GM12878 (cell line): ENCODE measurements at regions of chr17 and their contacts with region 1.

Region 1: GRCh38 chr17:8991514-8992285 is 26.2 kb upstream of the PIK3R5 start:
- DNase-seq: no peak
- ATAC-seq: peak; percentile 74
- H3K4me3 ChIP-seq: no peak overlapping the region
- H3K27ac ChIP-seq: no peak overlapping the region
- H3K4me1 ChIP-seq: peaks cover 12% of the 10 kb centered on the region
- H3K27me3 ChIP-seq: no peaks in the 10 kb centered on the region
- CTCF ChIP-seq: peak; percentile 38 to 77 (median 71)
- EP300 ChIP-seq: no peak
- POLR2A ChIP-seq: no peak
- RAD21 ChIP-seq: peak; percentile 57

Region 2: GRCh38 chr17:8581002-8581658 is 410.6 kb before region 1 on chr17:
- CTCF ChIA-PET with region 1: no interaction called
- POLR2A ChIA-PET with region 1: no interaction called
- RAD21 ChIA-PET with region 1: no interaction called
- SMC1A ChIA-PET with region 1: no interaction called
- in situ Hi-C with region 1: no loop called
- intact Hi-C with region 1: loop called (anchors 10 kb)
- DNase-seq: peak; percentile 46
- ATAC-seq: peak; percentile 89
- H3K4me3 ChIP-seq: no peak overlapping the region
- H3K27ac ChIP-seq: peak overlapping the region; percentile 10; the same call in 1 of the 2 replicates
- H3K4me1 ChIP-seq: peaks cover 15% of the 10 kb centered on the region
- H3K27me3 ChIP-seq: no peaks in the 10 kb centered on the region
- CTCF ChIP-seq: no peak
- EP300 ChIP-seq: peak; percentile 11 to 13; a peak in 1 of 4 replicates
- POLR2A ChIP-seq: no peak
- RAD21 ChIP-seq: no peak

Region 3: GRCh38 chr17:9037736-9038135 is 46.0 kb after region 1 on chr17:
- CTCF ChIA-PET with region 1: no interaction called
- POLR2A ChIA-PET with region 1: no interaction called
- RAD21 ChIA-PET with region 1: no interaction called
- SMC1A ChIA-PET with region 1: no interaction called
- in situ Hi-C with region 1: no loop called
- intact Hi-C with region 1: no loop called
- DNase-seq: no peak
- ATAC-seq: no peak
- H3K4me3 ChIP-seq: no peak overlapping the region
- H3K27ac ChIP-seq: no peak overlapping the region
- H3K4me1 ChIP-seq: no peaks in the 10 kb centered on the region
- H3K27me3 ChIP-seq: no peaks in the 10 kb centered on the region
- CTCF ChIP-seq: no peak
- EP300 ChIP-seq: no peak
- POLR2A ChIP-seq: no peak
- RAD21 ChIP-seq: no peak

Region 4: GRCh38 chr17:9162275-9162985 is 170.7 kb after region 1 on chr17:
- CTCF ChIA-PET with region 1: no interaction called
- POLR2A ChIA-PET with region 1: no interaction called
- RAD21 ChIA-PET with region 1: no interaction called
- SMC1A ChIA-PET with region 1: no interaction called
- in situ Hi-C with region 1: no loop called
- intact Hi-C with region 1: no loop called
- DNase-seq: no peak
- ATAC-seq: no peak
- H3K4me3 ChIP-seq: no peak overlapping the region
- H3K27ac ChIP-seq: no peak overlapping the region
- H3K4me1 ChIP-seq: no peaks in the 10 kb centered on the region
- H3K27me3 ChIP-seq: no peaks in the 10 kb centered on the region
- CTCF ChIP-seq: no peak
- EP300 ChIP-seq: no peak
- POLR2A ChIP-seq: no peak
- RAD21 ChIP-seq: no peak